ENCODE measurements at regions of chr1 and their contacts with region 1.

Region 1: GRCh38 chr1:156383023-156383422 is 14.0 kb downstream of the RHBG start:
- DNase-seq: peak; percentile 74
- ATAC-seq: peak; percentile 84
- H3K4me3 Mint-ChIP-seq: no peak overlapping the region
- H3K27ac Mint-ChIP-seq: no peak overlapping the region
- H3K4me1 Mint-ChIP-seq: peaks cover 6% of the 10 kb centered on the region
- H3K27me3 Mint-ChIP-seq: peaks cover 14% of the 10 kb centered on the region

Region 2: GRCh38 chr1:156193488-156194299 is 189.3 kb before region 1 on chr1 and contains the start of gene SLC25A44:
- CTCF ChIA-PET with region 1: no interaction called
- DNase-seq: peak; percentile 99
- ATAC-seq: peak; percentile 97
- H3K4me3 Mint-ChIP-seq: peak within 1 kb of the TSS; percentile 96
- H3K27ac Mint-ChIP-seq: peak within 1 kb of the TSS; percentile 95
- H3K4me1 Mint-ChIP-seq: peaks cover 55% of the 10 kb centered on the region
- H3K27me3 Mint-ChIP-seq: no peaks in the 10 kb centered on the region
- total RNA-seq, gene SLC25A44: 41.4 to 48.4 TPM

Region 3: DNA sequence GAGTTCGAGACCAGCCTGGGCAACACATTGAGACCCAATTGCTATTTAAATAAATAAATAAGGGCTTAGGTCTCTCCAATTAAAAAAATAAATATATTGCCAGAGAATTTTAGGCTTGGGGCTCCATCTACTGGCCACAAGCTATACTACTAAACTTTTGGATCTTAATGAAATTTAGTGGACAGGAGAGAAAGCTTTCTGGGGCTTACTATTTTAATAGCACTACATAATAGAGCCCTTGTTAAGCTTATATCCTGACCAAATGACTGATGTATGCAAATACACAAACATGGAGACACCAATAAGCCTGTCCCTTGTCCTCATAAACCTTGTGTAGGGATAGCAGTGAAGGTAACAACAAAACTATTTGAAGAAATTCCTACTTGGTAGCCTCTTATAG is 63.4 kb before region 1 on chr1:
- CTCF ChIA-PET with region 1: no interaction called
- DNase-seq: no peak
- ATAC-seq: no peak
- H3K4me3 Mint-ChIP-seq: no peak overlapping the region
- H3K27ac Mint-ChIP-seq: no peak overlapping the region
- H3K4me1 Mint-ChIP-seq: no peaks in the 10 kb centered on the region
- H3K27me3 Mint-ChIP-seq: no peaks in the 10 kb centered on the region

Region 4: GRCh38 chr1:156356875-156357534 is 26.0 kb before region 1 on chr1:
- CTCF ChIA-PET with region 1: interaction called, 25 read pairs
- DNase-seq: peak; percentile 66
- ATAC-seq: peak; percentile 92
- H3K4me3 Mint-ChIP-seq: no peak overlapping the region
- H3K27ac Mint-ChIP-seq: no peak overlapping the region
- H3K4me1 Mint-ChIP-seq: peaks cover 6% of the 10 kb centered on the region
- H3K27me3 Mint-ChIP-seq: peaks cover 54% of the 10 kb centered on the region

Region 5: DNA sequence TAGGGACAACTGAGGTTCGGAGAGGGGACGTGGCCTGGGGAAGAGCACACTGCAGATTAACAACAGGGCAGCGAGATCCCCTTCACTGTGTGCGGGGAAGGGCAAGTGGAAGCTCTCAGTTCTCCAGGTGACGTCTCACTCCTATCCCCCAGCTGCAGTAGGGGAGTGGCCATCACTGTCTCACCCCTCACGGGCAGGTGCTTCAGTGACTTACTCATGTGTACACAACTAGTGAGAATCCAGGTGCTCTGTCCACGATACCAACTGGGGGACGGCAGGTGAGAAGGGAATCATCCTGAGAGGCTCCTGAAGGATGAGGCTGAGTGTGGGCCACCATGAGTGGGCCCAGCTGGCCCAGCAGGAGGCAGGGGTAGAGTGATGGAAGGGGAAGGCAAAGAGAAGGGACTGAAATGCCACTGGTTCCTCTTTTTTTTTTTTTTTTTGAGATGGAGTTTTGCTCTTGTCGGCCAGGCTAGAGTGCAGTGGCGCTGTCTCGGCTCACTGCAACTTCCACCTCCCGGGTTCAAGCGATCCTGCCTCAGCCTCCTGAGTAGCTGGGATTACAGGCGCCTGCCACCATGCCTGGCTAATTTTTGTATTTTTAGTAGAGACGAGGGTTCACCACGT is 11.9 kb after region 1 on chr1:
- CTCF ChIA-PET with region 1: interaction called, 17 read pairs
- DNase-seq: no peak
- ATAC-seq: no peak
- H3K4me3 Mint-ChIP-seq: no peak overlapping the region
- H3K27ac Mint-ChIP-seq: no peak overlapping the region
- H3K4me1 Mint-ChIP-seq: no peaks in the 10 kb centered on the region
- H3K27me3 Mint-ChIP-seq: peaks cover 9% of the 10 kb centered on the region

Region 6: GRCh38 chr1:156421062-156421938 is 38.3 kb after region 1 on chr1:
- CTCF ChIA-PET with region 1: interaction called, 58 read pairs
- DNase-seq: peak; percentile 84
- ATAC-seq: peak; percentile 82
- H3K4me3 Mint-ChIP-seq: peak overlapping the region; percentile 79
- H3K27ac Mint-ChIP-seq: no peak overlapping the region
- H3K4me1 Mint-ChIP-seq: peaks cover 18% of the 10 kb centered on the region
- H3K27me3 Mint-ChIP-seq: peaks cover 91% of the 10 kb centered on the region

Region 7: GRCh38 chr1:156456622-156457465 is 73.8 kb after region 1 on chr1:
- CTCF ChIA-PET with region 1: interaction called, 463 read pairs
- DNase-seq: peak; percentile 97
- ATAC-seq: peak; percentile 92
- H3K4me3 Mint-ChIP-seq: peak overlapping the region; percentile 86
- H3K27ac Mint-ChIP-seq: peak overlapping the region; percentile 95
- H3K4me1 Mint-ChIP-seq: peaks cover 31% of the 10 kb centered on the region
- H3K27me3 Mint-ChIP-seq: peaks cover 7% of the 10 kb centered on the region

Region 8: DNA sequence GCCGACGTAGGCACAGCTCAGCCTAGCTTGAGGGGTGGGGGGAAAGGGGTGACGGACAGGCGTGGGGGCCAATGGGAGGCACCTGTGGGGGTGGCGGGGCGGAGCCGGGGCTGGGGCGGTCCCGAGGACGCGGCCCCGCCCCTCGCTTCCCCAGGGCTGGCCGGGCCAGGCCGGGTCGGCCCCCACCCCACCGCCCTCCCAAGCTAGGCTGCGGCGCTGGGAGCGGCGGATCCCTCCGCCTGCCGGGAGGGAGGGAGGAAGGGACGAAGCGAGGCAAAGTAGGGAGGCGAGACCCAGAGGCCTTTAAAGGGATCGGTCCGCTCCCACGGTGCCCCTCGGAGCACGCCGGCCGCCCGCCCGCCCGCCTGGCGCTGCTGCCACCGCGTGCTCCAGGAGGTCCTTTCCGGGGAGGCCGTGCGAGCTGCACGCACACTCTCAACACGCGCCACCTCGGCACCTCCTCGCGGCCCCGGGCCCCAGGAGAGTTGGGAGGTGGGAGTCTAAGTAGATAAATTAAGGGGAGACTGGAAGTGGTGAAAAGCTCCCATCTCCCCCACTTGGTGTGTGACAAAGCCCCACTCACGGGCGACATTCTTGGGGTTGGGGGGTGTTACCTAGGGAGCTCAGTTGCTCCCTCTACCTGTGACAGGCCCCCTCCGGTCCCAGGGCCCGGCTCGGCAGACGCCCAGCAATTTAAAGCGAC is 117.9 kb after region 1 on chr1:
- CTCF ChIA-PET with region 1: interaction called, 14 read pairs
- DNase-seq: peak; percentile 95
- ATAC-seq: peak; percentile 72
- H3K4me3 Mint-ChIP-seq: peak overlapping the region; percentile 88
- H3K27ac Mint-ChIP-seq: peak overlapping the region; percentile 97
- H3K4me1 Mint-ChIP-seq: peaks cover 74% of the 10 kb centered on the region
- H3K27me3 Mint-ChIP-seq: no peaks in the 10 kb centered on the region

Region 9: GRCh38 chr1:156618853-156619581 is 236.0 kb after region 1 on chr1 and contains the start of gene HAPLN2:
- CTCF ChIA-PET with region 1: interaction called, 15 read pairs
- DNase-seq: no peak
- ATAC-seq: peak; percentile 46
- H3K4me3 Mint-ChIP-seq: no peak within 1 kb of the TSS
- H3K27ac Mint-ChIP-seq: no peak within 1 kb of the TSS
- H3K4me1 Mint-ChIP-seq: no peaks in the 10 kb centered on the region
- H3K27me3 Mint-ChIP-seq: peaks cover 63% of the 10 kb centered on the region
- total RNA-seq, gene HAPLN2: not detected

Measured in activated CD8-positive, alpha-beta memory T cell treated with anti-CD3 and anti-CD28 coated beads, Interleukin-2, amount 10 ng/mL, durations not matched to agents 7 days and 5 days (primary cell).